PC-3 (cell line): ENCODE measurements at regions of chr1 and their contacts with region 1.

Region 1: DNA sequence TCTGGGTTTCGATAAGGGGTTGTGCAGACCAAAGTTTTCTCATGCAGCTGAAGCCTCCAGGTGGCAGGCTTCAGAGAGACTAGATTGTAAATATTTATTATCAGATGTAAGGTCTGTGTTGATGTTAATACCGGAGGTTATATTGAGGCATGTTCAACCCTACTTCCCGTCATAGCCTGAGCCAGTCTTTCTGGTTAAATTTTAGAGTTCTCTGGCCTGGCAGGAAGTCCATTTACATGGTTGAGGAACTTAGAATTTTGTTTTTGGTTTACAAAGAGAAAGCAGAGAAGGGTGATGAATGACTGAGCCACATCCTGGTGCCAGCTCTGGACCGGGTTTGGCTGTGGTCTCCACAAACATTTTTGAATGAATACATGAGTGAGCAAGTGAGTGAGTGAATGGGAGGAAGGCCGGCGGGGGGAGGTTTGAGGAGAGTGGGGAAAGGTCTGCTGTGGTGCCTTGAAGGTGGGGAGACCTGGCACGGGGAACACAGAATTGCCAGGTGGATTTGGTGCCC is 218.5 kb downstream of the DISC1 start:
- DNase-seq: peak; percentile 80
- ATAC-seq: peak; percentile 74
- H3K4me3 ChIP-seq: peak overlapping the region; percentile 8; the same call in 1 of the 2 replicates
- H3K27ac ChIP-seq: peak overlapping the region; percentile 54
- H3K4me1 ChIP-seq: peaks cover 20% of the 10 kb centered on the region
- H3K27me3 ChIP-seq: no peaks in the 10 kb centered on the region
- CTCF ChIP-seq: peak; percentile 53

Region 2: GRCh38 chr1:232805269-232806185 is 960.5 kb after region 1 on chr1 and contains the start of gene MAP10:
- CTCF ChIA-PET with region 1: no interaction called
- POLR2A ChIA-PET with region 1: interaction called, 14 read pairs
- intact Hi-C with region 1: no loop called
- DNase-seq: no peak
- ATAC-seq: no peak
- H3K4me3 ChIP-seq: no peak within 1 kb of the TSS
- H3K27ac ChIP-seq: no peak within 1 kb of the TSS
- H3K4me1 ChIP-seq: no peaks in the 10 kb centered on the region
- H3K27me3 ChIP-seq: peaks cover 3% of the 10 kb centered on the region; the same call in 1 of the 2 replicates
- CTCF ChIP-seq: no peak
- total RNA-seq, gene MAP10: not detected in 2 replicates